ENCODE measurements at regions of chr16 and their contacts with region 1.

Region 1: DNA sequence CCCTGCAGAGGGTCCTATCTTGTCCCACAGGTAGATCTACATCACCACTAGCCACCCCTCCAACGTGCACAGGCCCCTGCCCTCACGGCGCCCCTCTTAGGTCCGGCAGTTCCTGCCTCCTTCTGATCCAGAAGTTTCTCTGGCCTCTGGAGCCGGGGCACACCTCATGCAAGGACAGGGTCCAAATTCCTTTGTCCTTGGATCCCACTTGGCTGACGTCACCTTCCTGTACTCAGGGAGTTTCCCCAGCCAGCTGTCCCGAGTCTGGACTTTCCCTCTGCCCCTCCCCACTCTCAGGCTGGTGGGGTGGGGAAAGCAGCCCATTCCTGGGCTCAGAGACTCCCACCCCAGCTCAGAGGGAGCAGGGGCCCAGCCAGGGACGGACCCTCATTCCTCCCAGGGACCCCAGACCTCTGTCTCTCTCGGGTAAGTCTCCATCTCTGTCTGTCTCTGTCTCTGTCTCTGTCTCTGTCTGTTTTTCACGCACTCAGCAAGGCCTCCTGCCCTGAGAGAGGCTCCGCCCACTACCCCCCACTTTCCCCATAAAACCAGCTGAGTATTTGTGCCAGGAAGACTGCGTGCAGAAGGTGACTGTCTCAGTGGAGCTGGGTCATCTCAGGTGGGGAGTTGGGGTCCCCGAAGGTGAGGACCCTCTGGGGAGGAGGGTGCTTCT is at the start of gene IL32:
- DNase-seq: peak; percentile 36 to 68
- ATAC-seq: peak; percentile 70
- H3K4me3 ChIP-seq: peak within 1 kb of the TSS; percentile 37 to 61 (median 49)
- H3K27ac ChIP-seq: peak within 1 kb of the TSS; percentile 75 to 85 (median 78)
- H3K4me1 ChIP-seq: peaks cover 35 to 36% of the 10 kb centered on the region in 2 donors
- H3K27me3 ChIP-seq: no peaks in the 10 kb centered on the region
- CTCF ChIP-seq: no peak
- POLR2A ChIP-seq: peak; percentile 23 to 58
- total RNA-seq, gene IL32: 45.4 to 79.0 (median 54.6) TPM

Region 2: DNA sequence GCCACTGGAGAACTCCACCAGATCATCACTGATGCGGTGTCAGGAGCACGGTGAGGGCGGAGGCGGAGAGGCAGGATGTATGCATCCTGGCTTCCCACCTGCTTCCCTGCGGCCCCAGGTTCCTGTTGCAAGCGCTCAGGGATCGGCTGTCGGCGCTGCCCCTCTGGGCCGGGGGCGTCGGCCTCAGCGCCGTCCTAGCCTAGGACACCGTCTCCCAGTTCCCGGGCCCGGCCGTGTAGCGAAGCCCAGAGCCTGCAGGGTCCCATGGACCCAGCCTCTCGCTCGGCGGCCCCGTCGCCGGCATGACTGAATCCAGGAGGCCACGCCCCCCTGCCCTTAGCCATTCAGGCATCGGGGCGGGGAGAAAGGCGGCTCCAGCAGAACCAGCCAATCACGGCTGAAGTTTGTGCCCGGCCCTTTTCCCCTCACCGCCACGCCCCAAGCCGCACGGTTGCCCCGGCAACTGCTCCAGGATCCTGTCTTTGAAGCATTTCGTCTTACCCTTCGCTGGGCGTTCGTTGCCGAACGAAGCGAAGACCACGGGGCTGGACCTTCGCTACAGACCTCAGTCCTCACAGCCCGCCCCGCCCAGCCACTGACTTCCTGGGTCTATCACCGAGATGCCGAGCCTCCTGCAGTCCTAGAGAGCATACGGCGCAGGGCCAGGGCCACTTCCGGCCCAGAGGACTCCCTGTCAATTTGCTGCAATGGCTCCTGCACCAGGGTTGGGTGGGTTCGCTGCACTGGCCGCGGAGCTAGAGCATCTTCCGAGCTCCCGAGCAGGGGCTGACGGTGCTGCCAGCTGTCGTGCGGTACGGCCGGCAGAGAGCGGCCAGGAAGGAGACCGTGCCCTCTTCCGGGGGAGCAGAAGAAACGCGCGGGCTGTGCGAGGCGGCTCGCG is 59.0 kb after region 1 on chr16:
- in situ Hi-C with region 1: loop called in 3 of 4 experiments (anchors 5 to 10 kb)
- intact Hi-C with region 1: no loop called
- DNase-seq: peak; percentile 91 to 93
- ATAC-seq: peak; percentile 96 to 97
- H3K4me3 ChIP-seq: peak overlapping the region; percentile 64 to 89 (median 70)
- H3K27ac ChIP-seq: peak overlapping the region; percentile 45 to 78 (median 58)
- H3K4me1 ChIP-seq: peaks cover 27 to 44% of the 10 kb centered on the region in 2 donors
- H3K27me3 ChIP-seq: no peaks in the 10 kb centered on the region
- CTCF ChIP-seq: no peak
- POLR2A ChIP-seq: peak in 1 of 2 donors; percentile 6

Region 3: GRCh38 chr16:3158471-3159314 is 93.5 kb after region 1 on chr16:
- in situ Hi-C with region 1: loop called in 1 of 4 experiments (anchors 10 kb)
- intact Hi-C with region 1: no loop called
- DNase-seq: peak in 1 of 2 donors; percentile 62
- ATAC-seq: peak; percentile 70 to 75
- H3K4me3 ChIP-seq: peak overlapping the region; percentile 60 to 92 (median 70)
- H3K27ac ChIP-seq: peak overlapping the region; percentile 74 to 80 (median 75)
- H3K4me1 ChIP-seq: peaks cover 3 to 15% of the 10 kb centered on the region in 2 donors
- H3K27me3 ChIP-seq: peaks cover 57 to 63% (median 62%) of the 10 kb centered on the region in 3 donors
- CTCF ChIP-seq: no peak
- POLR2A ChIP-seq: peak in 1 of 2 donors; percentile 32